Mammary epithelial cell (primary cell): ENCODE measurements at regions of chr2 and their contacts with region 1.

Region 1: GRCh38 chr2:238970553-238971081 is 122.7 kb downstream of the TWIST2 start:
- DNase-seq: peak; percentile 36
- H3K4me3 ChIP-seq: no peak overlapping the region
- H3K27ac ChIP-seq: no peak overlapping the region
- H3K4me1 ChIP-seq: peaks cover 21% of the 10 kb centered on the region
- H3K27me3 ChIP-seq: no peaks in the 10 kb centered on the region
- CTCF ChIP-seq: peak; percentile 100

Region 2: DNA sequence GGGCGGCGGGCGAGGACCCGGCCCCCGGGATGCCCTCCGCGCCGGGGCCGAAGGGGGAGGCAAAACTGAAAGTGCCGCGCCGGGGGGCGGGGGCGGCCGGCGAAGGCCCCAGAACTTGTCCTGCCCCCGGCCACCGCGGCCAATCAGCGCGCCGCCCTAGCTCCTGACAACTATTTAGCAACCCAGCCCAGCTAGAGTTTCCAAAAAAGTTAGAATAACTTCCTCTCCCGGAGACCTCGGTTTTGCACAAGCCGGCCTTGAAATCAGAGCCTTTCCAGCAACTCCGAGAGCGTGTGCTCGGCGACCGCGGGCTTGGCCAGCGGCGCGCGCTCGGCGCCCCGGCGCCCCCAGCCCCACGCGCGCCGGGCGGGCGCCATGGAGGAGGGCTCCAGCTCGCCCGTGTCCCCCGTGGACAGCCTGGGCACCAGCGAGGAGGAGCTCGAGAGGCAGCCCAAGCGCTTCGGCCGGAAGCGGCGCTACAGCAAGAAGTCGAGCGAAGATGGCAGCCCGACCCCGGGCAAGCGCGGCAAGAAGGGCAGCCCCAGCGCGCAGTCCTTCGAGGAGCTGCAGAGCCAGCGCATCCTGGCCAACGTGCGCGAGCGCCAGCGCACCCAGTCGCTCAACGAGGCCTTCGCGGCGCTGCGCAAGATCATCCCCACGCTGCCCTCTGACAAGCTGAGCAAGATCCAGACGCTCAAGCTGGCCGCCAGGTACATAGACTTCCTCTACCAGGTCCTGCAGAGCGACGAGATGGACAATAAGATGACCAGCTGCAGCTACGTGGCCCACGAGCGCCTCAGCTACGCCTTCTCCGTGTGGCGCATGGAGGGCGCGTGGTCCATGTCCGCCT is 122.6 kb before region 1 on chr2 and contains the start of gene TWIST2:
- CTCF ChIA-PET with region 1: no interaction called
- dilution Hi-C with region 1: no loop called
- in situ Hi-C with region 1: no loop called
- intact Hi-C with region 1: loop called (anchors 1 kb)
- DNase-seq: peak; percentile 78
- H3K4me3 ChIP-seq: peak within 1 kb of the TSS; percentile 61 to 98 (median 90)
- H3K27ac ChIP-seq: peak within 1 kb of the TSS; percentile 38
- H3K4me1 ChIP-seq: peaks cover 14% of the 10 kb centered on the region
- H3K27me3 ChIP-seq: no peaks in the 10 kb centered on the region
- CTCF ChIP-seq: no peak
- total RNA-seq, gene TWIST2: 0.83 to 17.6 TPM

Region 3: DNA sequence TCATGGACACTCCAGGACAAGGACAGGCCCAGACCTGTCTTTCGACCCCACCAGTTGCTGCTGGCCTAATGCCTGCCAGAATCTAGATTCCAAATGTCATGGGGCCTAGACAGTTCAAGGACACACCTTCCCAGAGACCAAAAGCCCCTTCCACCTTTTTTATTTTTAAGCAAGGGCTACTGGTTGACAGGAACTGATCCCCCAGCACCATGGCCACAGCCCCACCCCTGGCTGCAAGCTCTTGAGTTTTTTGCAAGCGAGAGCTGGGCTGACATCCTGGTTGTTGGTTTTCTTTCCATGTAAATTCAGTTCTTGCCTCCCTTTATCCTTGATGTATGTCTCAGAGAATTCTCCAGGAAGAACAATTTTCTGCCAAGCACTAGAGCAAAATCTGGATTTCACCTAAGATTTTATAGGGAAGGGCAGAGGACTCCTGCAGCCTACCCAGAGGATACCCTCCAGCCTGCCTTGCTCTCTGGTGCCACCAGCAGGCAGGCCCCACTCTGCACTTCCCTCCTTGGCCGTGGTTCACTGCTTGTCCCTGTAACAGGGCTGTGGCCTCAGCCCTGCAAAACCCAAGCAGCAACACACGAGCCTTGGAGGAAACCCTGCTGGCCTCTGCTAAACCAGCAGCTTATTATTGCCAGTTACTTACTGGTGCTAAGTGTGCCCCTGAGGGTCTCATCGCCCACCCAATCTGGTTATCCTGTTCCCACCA is 25.0 kb before region 1 on chr2:
- CTCF ChIA-PET with region 1: no interaction called
- dilution Hi-C with region 1: no loop called
- in situ Hi-C with region 1: no loop called
- intact Hi-C with region 1: loop called (anchors 1 kb)
- DNase-seq: no peak
- H3K4me3 ChIP-seq: no peak overlapping the region
- H3K27ac ChIP-seq: no peak overlapping the region
- H3K4me1 ChIP-seq: peaks cover 55% of the 10 kb centered on the region
- H3K27me3 ChIP-seq: no peaks in the 10 kb centered on the region
- CTCF ChIP-seq: peak; percentile 77 to 93

Region 4: GRCh38 chr2:239025096-239025801 is 54.6 kb after region 1 on chr2:
- CTCF ChIA-PET with region 1: no interaction called
- dilution Hi-C with region 1: no loop called
- in situ Hi-C with region 1: no loop called
- intact Hi-C with region 1: no loop called
- DNase-seq: peak; percentile 66
- H3K4me3 ChIP-seq: no peak overlapping the region
- H3K27ac ChIP-seq: no peak overlapping the region
- H3K4me1 ChIP-seq: peaks cover 4% of the 10 kb centered on the region
- H3K27me3 ChIP-seq: peaks cover 2% of the 10 kb centered on the region
- CTCF ChIP-seq: no peak

Region 5: GRCh38 chr2:239106314-239106908 is 135.8 kb after region 1 on chr2:
- CTCF ChIA-PET with region 1: interaction called, 12 read pairs
- dilution Hi-C with region 1: no loop called
- in situ Hi-C with region 1: no loop called
- intact Hi-C with region 1: no loop called
- DNase-seq: peak; percentile 43
- H3K4me3 ChIP-seq: no peak overlapping the region
- H3K27ac ChIP-seq: no peak overlapping the region
- H3K4me1 ChIP-seq: peaks cover 9% of the 10 kb centered on the region
- H3K27me3 ChIP-seq: no peaks in the 10 kb centered on the region
- CTCF ChIP-seq: peak; percentile 45 to 77

Region 6: DNA sequence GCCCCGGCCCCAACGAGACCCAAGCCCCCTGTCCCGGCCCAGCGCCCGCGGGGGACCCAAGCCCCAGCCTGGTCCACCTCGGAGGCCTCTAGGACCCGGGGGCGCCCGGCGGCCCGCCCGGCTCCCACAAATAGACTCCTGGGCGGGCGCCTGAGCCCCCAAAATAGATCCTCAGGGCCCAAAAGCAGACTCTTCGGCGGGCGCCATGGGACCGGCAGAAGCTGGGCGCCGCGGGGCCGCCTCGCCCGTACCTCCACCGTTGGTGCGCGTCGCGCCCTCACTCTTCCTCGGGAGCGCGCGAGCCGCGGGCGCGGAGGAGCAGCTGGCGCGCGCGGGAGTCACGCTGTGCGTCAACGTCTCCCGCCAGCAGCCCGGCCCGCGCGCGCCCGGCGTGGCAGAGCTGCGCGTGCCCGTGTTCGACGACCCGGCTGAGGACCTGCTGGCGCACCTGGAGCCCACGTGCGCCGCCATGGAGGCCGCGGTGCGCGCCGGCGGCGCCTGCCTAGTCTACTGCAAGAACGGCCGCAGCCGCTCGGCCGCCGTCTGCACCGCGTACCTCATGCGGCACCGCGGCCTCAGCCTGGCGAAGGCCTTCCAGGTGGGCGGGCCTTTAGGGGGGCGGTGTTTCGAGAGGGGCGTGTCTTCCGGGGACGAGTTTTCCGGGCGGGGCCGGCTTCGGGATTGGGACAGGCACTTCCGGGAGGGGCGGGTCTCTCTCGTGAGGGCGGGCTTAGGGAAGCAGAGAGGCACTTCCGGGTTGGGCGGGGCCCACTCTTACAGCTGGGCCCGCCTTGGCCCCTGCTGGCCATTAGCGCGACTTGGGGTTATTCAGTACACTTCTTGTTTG is 1590.1 kb after region 1 on chr2:
- CTCF ChIA-PET with region 1: no interaction called
- dilution Hi-C with region 1: no loop called
- in situ Hi-C with region 1: no loop called
- intact Hi-C with region 1: no loop called
- DNase-seq: peak; percentile 97
- H3K4me3 ChIP-seq: peak overlapping the region; percentile 64 to 78 (median 69)
- H3K27ac ChIP-seq: peak overlapping the region; percentile 73
- H3K4me1 ChIP-seq: peaks cover 39% of the 10 kb centered on the region
- H3K27me3 ChIP-seq: no peaks in the 10 kb centered on the region
- CTCF ChIP-seq: peak; percentile 9 to 23